ENCODE measurements at regions of chr9 and their contacts with region 1.

Region 1: DNA sequence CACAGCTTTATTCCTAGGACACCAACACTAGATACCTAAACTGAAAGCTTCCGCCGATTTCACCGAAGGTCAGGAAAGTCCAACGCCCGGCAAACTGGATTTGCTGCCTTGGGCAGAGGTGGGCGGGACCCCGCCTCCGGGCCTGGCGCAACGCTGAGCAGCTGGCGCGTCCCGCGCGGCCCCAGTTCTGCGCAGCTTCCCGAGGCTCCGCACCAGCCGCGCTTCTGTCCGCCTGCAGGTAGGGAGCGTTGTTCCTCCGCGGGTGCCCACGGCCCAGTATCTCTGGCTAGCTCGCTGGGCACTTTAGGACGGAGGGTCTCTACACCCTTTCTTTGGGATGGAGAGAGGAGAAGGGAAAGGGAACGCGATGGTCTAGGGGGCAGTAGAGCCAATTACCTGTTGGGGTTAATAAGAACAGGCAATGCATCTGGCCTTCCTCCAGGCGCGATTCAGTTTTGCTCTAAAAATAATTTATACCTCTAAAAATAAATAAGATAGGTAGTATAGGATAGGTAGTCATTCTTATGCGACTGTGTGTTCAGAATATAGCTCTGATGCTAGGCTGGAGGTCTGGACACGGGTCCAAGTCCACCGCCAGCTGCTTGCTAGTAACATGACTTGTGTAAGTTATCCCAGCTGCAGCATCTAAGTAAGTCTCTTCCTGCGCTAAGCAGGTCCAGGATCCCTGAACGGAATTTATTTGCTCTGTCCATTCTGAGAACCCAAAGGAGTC is at the start of gene CD274:
- DNase-seq: peak; percentile 78 to 82 (median 80)
- H3K4me3 ChIP-seq: peak within 1 kb of the TSS; percentile 65 to 67
- H3K4me3 Mint-ChIP-seq: peak within 1 kb of the TSS; percentile 87 to 96 (median 94)
- H3K27ac ChIP-seq: peak within 1 kb of the TSS; percentile 97
- H3K27ac Mint-ChIP-seq: peak within 1 kb of the TSS; percentile 92 to 99 (median 95)
- H3K4me1 ChIP-seq: peaks cover 77% of the 10 kb centered on the region
- H3K4me1 Mint-ChIP-seq: peaks cover 50 to 89% (median 62%) of the 10 kb centered on the region in 4 donors
- H3K27me3 ChIP-seq: no peaks in the 10 kb centered on the region
- H3K27me3 Mint-ChIP-seq: no peaks in the 10 kb centered on the region
- total RNA-seq, gene CD274: 16.2 to 23.0 TPM

Region 2: DNA sequence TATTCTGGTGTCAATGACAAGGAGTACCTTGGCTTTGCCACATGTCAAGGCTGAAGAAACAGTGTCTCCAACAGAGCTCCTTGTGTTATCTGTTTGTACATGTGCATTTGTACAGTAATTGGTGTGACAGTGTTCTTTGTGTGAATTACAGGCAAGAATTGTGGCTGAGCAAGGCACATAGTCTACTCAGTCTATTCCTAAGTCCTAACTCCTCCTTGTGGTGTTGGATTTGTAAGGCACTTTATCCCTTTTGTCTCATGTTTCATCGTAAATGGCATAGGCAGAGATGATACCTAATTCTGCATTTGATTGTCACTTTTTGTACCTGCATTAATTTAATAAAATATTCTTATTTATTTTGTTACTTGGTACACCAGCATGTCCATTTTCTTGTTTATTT is 19.6 kb after region 1 on chr9:
- CTCF ChIA-PET with region 1: interaction called, 20 read pairs
- POLR2A ChIA-PET with region 1: interaction called, 5 read pairs
- intact Hi-C with region 1: no loop called
- DNase-seq: no peak
- H3K4me3 ChIP-seq: no peak overlapping the region
- H3K4me3 Mint-ChIP-seq: no peak overlapping the region
- H3K27ac ChIP-seq: no peak overlapping the region
- H3K27ac Mint-ChIP-seq: peak overlapping the region in 1 of 7 donors; percentile 34
- H3K4me1 ChIP-seq: no peaks in the 10 kb centered on the region
- H3K4me1 Mint-ChIP-seq: peaks cover 0 to 5% (median 1%) of the 10 kb centered on the region in 4 donors
- H3K27me3 ChIP-seq: no peaks in the 10 kb centered on the region
- H3K27me3 Mint-ChIP-seq: no peaks in the 10 kb centered on the region

Region 3: GRCh38 chr9:5510360-5510931 is 59.9 kb after region 1 on chr9 and contains the start of gene PDCD1LG2:
- CTCF ChIA-PET with region 1: interaction called, 12 read pairs
- POLR2A ChIA-PET with region 1: interaction called, 11 read pairs
- intact Hi-C with region 1: no loop called
- DNase-seq: peak in 2 of 5 donors; percentile 9 to 10
- H3K4me3 ChIP-seq: peak within 1 kb of the TSS in 1 of 2 donors; percentile 16
- H3K4me3 Mint-ChIP-seq: peak within 1 kb of the TSS; percentile 82 to 90 (median 86)
- H3K27ac ChIP-seq: peak within 1 kb of the TSS; percentile 47
- H3K27ac Mint-ChIP-seq: peak within 1 kb of the TSS; percentile 80 to 95 (median 94)
- H3K4me1 ChIP-seq: peaks cover 34% of the 10 kb centered on the region
- H3K4me1 Mint-ChIP-seq: peaks cover 37 to 62% (median 46%) of the 10 kb centered on the region in 4 donors
- H3K27me3 ChIP-seq: no peaks in the 10 kb centered on the region
- H3K27me3 Mint-ChIP-seq: no peaks in the 10 kb centered on the region
- total RNA-seq, gene PDCD1LG2: 0.90 to 1.1 TPM

Region 4: GRCh38 chr9:5529683-5530221 is 79.2 kb after region 1 on chr9:
- CTCF ChIA-PET with region 1: interaction called, 3 read pairs
- POLR2A ChIA-PET with region 1: interaction called, 20 read pairs
- intact Hi-C with region 1: loop called (anchors 2 kb)
- DNase-seq: no peak
- H3K4me3 ChIP-seq: no peak overlapping the region
- H3K4me3 Mint-ChIP-seq: peak overlapping the region in 1 of 8 donors; percentile 2
- H3K27ac ChIP-seq: no peak overlapping the region
- H3K27ac Mint-ChIP-seq: peak overlapping the region in 5 of 7 donors; percentile 36 to 86 (median 67)
- H3K4me1 ChIP-seq: peaks cover 37% of the 10 kb centered on the region
- H3K4me1 Mint-ChIP-seq: peaks cover 37 to 47% (median 42%) of the 10 kb centered on the region in 4 donors
- H3K27me3 ChIP-seq: no peaks in the 10 kb centered on the region
- H3K27me3 Mint-ChIP-seq: no peaks in the 10 kb centered on the region

Region 5: DNA sequence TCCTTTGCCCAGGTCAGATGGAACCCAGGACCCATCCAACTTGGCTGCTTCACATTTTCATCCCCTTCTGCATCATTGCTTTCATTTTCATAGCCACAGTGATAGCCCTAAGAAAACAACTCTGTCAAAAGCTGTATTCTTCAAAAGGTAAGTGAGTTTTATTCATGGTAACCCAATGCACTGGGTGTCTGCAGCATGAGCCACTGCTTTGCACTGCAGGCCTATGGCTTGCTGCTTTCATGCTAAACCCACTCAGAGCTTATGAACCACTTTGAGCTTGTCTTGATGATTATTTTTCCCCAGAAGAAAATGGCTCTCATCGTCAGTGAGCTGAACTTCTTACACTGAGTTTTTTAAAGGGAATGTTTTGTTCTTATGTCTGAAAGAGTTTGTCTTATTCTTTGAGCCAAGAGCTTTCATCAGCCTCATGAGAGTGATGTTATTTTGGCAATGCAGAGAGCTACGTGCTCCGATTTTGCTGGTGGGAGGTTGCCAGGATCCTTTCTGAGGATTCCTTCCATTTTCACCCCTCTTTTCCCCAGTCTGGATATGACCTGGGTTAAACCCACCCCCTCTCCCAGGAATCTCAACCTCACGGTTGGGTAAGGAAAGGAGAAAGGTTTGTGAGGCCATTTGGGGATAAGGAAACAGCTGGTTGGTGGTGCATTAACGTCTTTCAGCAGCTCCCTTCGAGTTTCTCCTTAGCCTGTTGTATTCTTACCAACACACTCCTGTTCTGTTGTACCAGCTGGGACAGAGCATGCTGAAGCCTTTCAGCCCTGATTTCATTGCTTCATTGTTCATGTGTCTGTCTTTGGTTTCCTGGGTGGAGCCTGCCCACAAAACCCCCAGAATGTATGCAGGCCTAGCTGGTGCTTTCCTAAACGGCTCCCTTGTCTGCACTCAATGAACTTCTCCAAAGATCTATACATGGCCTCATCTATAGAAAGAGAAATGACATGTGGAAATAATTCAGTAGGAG is 107.4 kb after region 1 on chr9:
- CTCF ChIA-PET with region 1: interaction called, 30 read pairs
- POLR2A ChIA-PET with region 1: interaction called, 30 read pairs
- intact Hi-C with region 1: no loop called
- DNase-seq: peak; percentile 61 to 79 (median 68)
- H3K4me3 ChIP-seq: peak overlapping the region in 1 of 2 donors; percentile 14
- H3K4me3 Mint-ChIP-seq: peak overlapping the region in 7 of 8 donors; percentile 26 to 85 (median 68)
- H3K27ac ChIP-seq: peak overlapping the region; percentile 56
- H3K27ac Mint-ChIP-seq: peak overlapping the region; percentile 85 to 99 (median 95)
- H3K4me1 ChIP-seq: peaks cover 42% of the 10 kb centered on the region
- H3K4me1 Mint-ChIP-seq: peaks cover 36 to 70% (median 59%) of the 10 kb centered on the region in 4 donors
- H3K27me3 ChIP-seq: no peaks in the 10 kb centered on the region
- H3K27me3 Mint-ChIP-seq: no peaks in the 10 kb centered on the region

Region 6: DNA sequence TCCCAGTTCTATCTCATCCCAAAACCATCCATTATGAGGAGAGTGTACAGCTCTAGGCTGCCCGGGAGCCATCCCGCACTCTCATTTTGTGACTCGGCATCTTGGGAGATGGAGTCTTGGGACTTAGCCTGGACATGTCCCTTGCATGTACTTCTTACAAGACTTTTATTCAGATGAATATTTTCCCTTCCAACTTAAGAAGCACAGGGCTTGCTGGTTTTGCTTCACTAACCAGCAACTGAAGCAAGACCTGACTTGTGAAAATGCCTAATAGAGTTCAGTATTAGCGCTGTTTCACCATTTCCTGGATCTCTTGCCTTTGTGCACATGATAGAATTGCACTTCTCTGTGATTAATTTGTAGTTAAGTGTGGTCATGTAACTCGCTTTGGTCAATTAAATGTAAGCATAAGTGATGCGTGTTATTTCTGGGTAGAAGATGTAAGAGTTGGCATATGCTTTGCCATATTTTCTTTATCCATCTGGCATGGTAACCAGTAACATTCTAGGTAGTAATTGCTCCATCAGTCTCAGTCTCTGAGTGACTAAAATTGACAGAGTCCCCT is 115.6 kb after region 1 on chr9:
- CTCF ChIA-PET with region 1: interaction called, 20 read pairs
- POLR2A ChIA-PET with region 1: interaction called, 8 read pairs
- intact Hi-C with region 1: no loop called
- DNase-seq: no peak
- H3K4me3 ChIP-seq: no peak overlapping the region
- H3K4me3 Mint-ChIP-seq: no peak overlapping the region
- H3K27ac ChIP-seq: no peak overlapping the region
- H3K27ac Mint-ChIP-seq: peak overlapping the region in 1 of 7 donors; percentile 7
- H3K4me1 ChIP-seq: peaks cover 28% of the 10 kb centered on the region
- H3K4me1 Mint-ChIP-seq: peaks cover 30 to 47% (median 35%) of the 10 kb centered on the region in 4 donors
- H3K27me3 ChIP-seq: no peaks in the 10 kb centered on the region
- H3K27me3 Mint-ChIP-seq: no peaks in the 10 kb centered on the region

Region 7: DNA sequence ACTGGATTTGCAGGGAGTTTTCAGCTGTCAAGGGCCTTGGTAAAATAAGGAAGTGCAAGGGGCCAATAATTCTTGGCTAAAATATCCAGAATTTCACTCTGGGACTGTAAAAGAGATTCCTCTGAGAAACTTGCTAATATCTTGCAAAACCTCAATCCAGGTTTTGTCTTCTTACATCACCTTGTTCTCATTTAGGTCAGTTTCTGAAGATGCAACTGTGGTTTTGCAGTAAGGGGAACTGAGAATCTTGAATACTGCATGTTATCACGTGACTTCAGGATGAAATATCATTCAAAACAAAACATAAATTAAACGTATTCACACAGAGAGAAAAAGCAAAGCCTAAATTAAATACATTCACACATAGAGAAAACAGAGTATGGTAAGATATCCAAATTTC is 143.4 kb after region 1 on chr9:
- CTCF ChIA-PET with region 1: interaction called, 236 read pairs
- POLR2A ChIA-PET with region 1: interaction called, 178 read pairs
- intact Hi-C with region 1: loop called (anchors 1 kb)
- DNase-seq: no peak
- H3K4me3 ChIP-seq: no peak overlapping the region
- H3K4me3 Mint-ChIP-seq: no peak overlapping the region
- H3K27ac ChIP-seq: no peak overlapping the region
- H3K27ac Mint-ChIP-seq: peak overlapping the region in 2 of 7 donors; percentile 3 to 15
- H3K4me1 ChIP-seq: peaks cover 5% of the 10 kb centered on the region
- H3K4me1 Mint-ChIP-seq: peaks cover 7 to 13% (median 8%) of the 10 kb centered on the region in 4 donors
- H3K27me3 ChIP-seq: no peaks in the 10 kb centered on the region
- H3K27me3 Mint-ChIP-seq: no peaks in the 10 kb centered on the region

Measured in CD4-positive, alpha-beta memory T cell (primary cell).